Activated naive CD4-positive, alpha-beta T cell treated with anti-CD3 and anti-CD28 coated beads for 36 hours (primary cell): ENCODE measurements at regions of chr22 and their contacts with region 1.

Region 1: DNA sequence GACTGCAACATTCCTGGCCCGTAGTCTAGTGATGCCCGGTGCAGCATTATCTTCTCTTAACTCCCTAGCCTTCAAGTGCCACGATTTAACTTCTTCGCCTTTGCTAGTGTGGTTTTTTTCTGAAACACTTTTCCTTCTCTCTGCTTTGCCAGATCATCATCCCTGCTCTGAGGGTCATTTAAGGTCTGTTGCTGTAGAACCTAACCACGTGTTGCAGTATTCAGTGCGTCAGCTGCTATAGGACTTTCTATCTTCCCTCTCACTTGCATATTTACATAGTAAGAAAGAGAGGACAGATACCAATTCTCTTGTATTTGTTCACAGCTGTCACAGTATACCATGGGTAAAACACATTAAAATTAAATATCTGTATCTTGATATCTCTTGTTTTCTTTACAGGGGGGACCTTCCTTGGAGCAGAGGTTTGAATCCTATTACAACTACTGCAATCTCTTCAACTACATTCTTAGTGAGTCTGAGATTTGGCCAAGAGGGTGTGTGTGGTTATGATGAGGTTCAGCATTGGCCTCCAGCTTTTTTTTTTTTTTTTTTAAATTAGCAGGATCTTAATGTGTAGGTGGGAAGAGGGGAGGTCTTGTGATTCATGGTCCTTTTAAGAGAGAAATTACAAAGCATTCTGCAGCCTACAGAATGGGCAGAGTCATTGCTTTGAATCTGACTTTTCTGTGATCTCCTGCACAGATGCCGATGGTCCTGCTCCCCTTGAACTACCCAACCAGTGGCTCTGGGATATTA is 13.5 kb downstream of the EIF3L start:
- DNase-seq: no peak
- H3K4me3 Mint-ChIP-seq: no peak overlapping the region
- H3K27ac Mint-ChIP-seq: no peak overlapping the region
- H3K4me1 Mint-ChIP-seq: no peaks in the 10 kb centered on the region
- H3K27me3 Mint-ChIP-seq: no peaks in the 10 kb centered on the region

Region 2: DNA sequence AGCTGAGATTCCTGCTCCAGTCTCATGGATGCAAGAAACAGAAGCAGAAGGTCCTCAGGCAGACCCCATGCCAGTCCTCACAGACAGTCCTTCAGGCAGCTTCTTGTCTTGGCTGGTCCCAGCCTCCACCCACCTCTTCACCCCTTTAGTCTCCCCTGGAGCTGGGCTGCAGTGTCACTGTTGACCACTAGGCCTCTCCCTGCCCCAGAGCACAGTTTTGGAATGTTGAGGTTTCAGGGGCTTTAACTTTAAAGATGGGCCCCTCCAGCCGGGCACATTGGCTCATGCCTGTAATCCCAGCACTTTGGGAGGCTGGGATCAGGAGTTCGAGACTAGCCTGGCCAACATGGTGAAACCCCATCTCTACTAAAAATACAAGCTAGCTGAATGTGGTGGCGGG is 94.5 kb before region 1 on chr22:
- CTCF ChIA-PET with region 1: interaction called, 10 read pairs
- intact Hi-C with region 1: no loop called
- DNase-seq: no peak
- H3K4me3 Mint-ChIP-seq: no peak overlapping the region
- H3K27ac Mint-ChIP-seq: no peak overlapping the region
- H3K4me1 Mint-ChIP-seq: no peaks in the 10 kb centered on the region
- H3K27me3 Mint-ChIP-seq: no peaks in the 10 kb centered on the region

Region 3: DNA sequence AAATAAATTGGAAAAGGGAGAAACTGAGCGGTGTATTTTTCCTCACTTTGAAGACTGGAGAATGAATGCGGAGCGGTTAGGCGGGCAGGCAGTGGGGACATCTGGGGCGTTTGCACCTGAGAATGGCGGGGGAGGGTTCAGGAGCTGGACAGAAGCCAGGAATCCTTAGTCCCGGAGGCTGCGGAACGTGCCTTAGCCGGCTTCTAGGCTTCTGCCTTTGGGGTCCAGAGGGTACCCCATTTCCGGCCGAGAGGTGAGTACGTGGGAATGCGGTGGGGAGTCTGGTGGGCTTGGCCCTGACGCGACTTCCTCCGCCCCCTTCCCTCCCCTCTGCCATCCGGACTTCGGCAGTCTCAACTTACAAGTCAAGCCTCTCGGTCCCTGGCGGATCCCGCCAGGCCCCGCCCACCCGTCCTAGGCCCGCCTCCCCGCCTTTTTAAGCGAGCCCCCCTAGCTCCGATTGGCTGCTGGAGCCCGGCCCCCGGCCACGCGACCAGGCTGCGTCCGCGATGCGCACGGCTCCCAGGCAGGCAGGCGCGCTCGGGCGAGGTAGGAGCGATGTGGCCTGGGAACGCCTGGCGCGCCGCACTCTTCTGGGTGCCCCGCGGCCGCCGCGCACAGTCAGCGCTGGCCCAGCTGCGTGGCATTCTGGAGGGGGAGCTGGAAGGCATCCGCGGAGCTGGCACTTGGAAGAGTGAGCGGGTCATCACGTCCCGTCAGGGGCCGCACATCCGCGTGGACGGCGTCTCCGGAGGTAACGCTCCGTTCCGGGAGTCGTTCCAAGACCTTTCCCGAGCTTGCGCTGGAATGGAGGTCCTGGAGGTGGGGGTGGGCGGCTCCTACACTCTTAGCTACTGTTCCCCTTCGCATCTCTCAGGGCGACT is 55.1 kb before region 1 on chr22 and contains the start of gene GCAT:
- CTCF ChIA-PET with region 1: interaction called, 16 read pairs
- intact Hi-C with region 1: no loop called
- DNase-seq: peak; percentile 96
- H3K4me3 Mint-ChIP-seq: peak within 1 kb of the TSS; percentile 80
- H3K27ac Mint-ChIP-seq: peak within 1 kb of the TSS; percentile 61
- H3K4me1 Mint-ChIP-seq: peaks cover 45% of the 10 kb centered on the region
- H3K27me3 Mint-ChIP-seq: peaks cover 48% of the 10 kb centered on the region
- total RNA-seq, gene GCAT: 26.9 to 27.2 TPM

Region 4: GRCh38 chr22:37880668-37881440 is 18.1 kb after region 1 on chr22:
- CTCF ChIA-PET with region 1: interaction called, 18 read pairs
- intact Hi-C with region 1: no loop called
- DNase-seq: no peak
- H3K4me3 Mint-ChIP-seq: no peak overlapping the region
- H3K27ac Mint-ChIP-seq: no peak overlapping the region
- H3K4me1 Mint-ChIP-seq: peaks cover 4% of the 10 kb centered on the region
- H3K27me3 Mint-ChIP-seq: no peaks in the 10 kb centered on the region

Region 5: DNA sequence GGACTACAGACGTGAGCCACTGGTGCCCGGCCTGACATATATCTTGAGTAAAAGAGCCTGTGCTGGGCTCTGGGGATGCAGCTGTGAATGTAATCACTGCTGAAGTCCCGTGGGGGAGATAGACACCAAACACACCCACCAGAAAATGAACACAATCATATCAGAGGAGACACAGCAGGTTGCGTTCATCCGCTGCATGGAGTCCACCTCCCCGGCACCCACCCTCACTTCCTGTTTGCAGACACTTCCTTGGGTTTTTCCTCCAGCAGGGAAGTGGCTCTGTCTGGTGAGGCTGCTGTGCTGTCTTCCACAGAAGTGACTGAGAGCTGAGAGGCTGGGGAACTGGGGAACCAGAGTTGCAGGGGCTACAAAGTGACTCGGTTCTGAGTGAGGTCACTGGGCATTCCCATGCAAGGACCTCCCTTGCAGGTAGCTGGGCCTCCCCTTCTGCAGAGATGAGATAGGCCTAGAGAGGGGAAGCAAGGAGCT is 50.5 kb after region 1 on chr22:
- CTCF ChIA-PET with region 1: no interaction called
- intact Hi-C with region 1: no loop called
- DNase-seq: peak; percentile 17
- H3K4me3 Mint-ChIP-seq: no peak overlapping the region
- H3K27ac Mint-ChIP-seq: peak overlapping the region; percentile 7
- H3K4me1 Mint-ChIP-seq: peaks cover 23% of the 10 kb centered on the region
- H3K27me3 Mint-ChIP-seq: no peaks in the 10 kb centered on the region

Region 6: DNA sequence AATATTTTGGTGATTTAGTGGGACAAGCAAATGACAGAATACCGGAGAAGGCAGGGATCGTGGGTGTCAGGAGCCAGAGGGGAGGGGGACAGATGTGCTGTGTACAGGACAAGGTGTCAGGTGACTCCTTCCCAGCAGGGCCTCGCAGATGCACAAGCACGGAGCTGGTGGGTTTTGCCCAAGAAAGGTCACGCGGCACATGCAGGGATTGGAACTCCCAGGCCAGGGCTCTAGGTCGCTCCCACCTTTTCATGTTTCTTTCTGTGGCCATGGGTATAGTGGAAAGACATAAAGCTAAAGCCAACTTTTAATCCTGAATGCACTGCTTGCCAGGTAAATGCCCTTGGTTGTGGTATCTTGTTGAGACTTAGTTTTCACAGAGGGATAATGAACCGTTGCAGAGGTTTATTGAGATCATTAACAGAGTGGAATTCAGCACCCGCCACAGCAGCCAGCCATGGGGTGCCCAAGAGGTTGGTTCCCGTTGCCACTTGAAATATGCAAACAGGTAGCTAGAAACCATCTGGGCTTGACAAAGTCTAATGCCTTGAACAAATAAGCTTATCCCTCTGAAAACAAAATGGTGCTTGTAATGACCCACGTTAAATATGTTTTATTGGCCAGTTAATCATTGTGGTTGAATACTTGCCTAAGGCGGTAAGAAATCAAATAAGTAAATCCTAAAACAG is 80.5 kb after region 1 on chr22:
- CTCF ChIA-PET with region 1: no interaction called
- intact Hi-C with region 1: no loop called
- DNase-seq: no peak
- H3K4me3 Mint-ChIP-seq: no peak overlapping the region
- H3K27ac Mint-ChIP-seq: no peak overlapping the region
- H3K4me1 Mint-ChIP-seq: no peaks in the 10 kb centered on the region
- H3K27me3 Mint-ChIP-seq: no peaks in the 10 kb centered on the region